Activated naive CD4-positive, alpha-beta T cell treated with anti-CD3 and anti-CD28 coated beads for 36 hours (primary cell): ENCODE measurements at regions of chr9 and their contacts with region 1.

Region 1: GRCh38 chr9:73104342-73104741 is 47.3 kb upstream of the ANXA1 start:
- DNase-seq: no peak
- H3K4me3 Mint-ChIP-seq: no peak overlapping the region
- H3K27ac Mint-ChIP-seq: no peak overlapping the region
- H3K4me1 Mint-ChIP-seq: no peaks in the 10 kb centered on the region
- H3K27me3 Mint-ChIP-seq: peaks cover 2% of the 10 kb centered on the region

Region 2: GRCh38 chr9:73093740-73094379 is 10.5 kb before region 1 on chr9:
- CTCF ChIA-PET with region 1: interaction called, 10 read pairs
- intact Hi-C with region 1: no loop called
- DNase-seq: no peak
- H3K4me3 Mint-ChIP-seq: no peak overlapping the region
- H3K27ac Mint-ChIP-seq: no peak overlapping the region
- H3K4me1 Mint-ChIP-seq: peaks cover 2% of the 10 kb centered on the region
- H3K27me3 Mint-ChIP-seq: no peaks in the 10 kb centered on the region

Region 3: DNA sequence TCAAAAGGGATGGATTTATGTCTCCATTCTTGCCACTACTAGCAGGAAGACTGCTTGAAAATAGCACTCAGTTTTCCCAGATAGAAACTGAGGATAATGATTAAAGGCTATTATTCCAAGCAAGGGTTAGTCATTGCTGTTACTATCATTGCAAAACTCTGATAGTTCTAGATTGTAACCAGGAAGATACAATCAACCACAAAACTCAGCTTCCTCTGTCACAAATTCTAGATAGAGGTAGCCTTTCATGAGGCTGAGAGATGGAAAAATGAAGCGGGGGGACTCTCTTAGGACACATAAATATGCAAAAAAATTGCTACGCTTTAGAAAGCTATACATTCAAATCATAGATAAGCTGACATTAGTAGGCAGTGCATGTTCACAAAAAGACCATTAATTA is 50.4 kb after region 1 on chr9:
- CTCF ChIA-PET with region 1: interaction called, 11 read pairs
- intact Hi-C with region 1: loop called (anchors 1 kb)
- DNase-seq: no peak
- H3K4me3 Mint-ChIP-seq: peak overlapping the region; percentile 62
- H3K27ac Mint-ChIP-seq: peak overlapping the region; percentile 86
- H3K4me1 Mint-ChIP-seq: peaks cover 73% of the 10 kb centered on the region
- H3K27me3 Mint-ChIP-seq: no peaks in the 10 kb centered on the region

Region 4: GRCh38 chr9:73160868-73161267 is 56.5 kb after region 1 on chr9:
- CTCF ChIA-PET with region 1: interaction called, 11 read pairs
- intact Hi-C with region 1: no loop called
- DNase-seq: no peak
- H3K4me3 Mint-ChIP-seq: no peak overlapping the region
- H3K27ac Mint-ChIP-seq: no peak overlapping the region
- H3K4me1 Mint-ChIP-seq: peaks cover 33% of the 10 kb centered on the region
- H3K27me3 Mint-ChIP-seq: no peaks in the 10 kb centered on the region